Heart left ventricle (tissue), 16 donors: ENCODE measurements at regions of chr3 and their contacts with region 1.

Region 1: GRCh38 chr3:186534113-186534669 is 10.0 kb downstream of the CRYGS start:
- DNase-seq: no peak
- ATAC-seq: peak in 2 of 4 donors; percentile 16 to 60
- H3K4me3 ChIP-seq: no peak overlapping the region
- H3K27ac ChIP-seq: no peak overlapping the region
- H3K4me1 ChIP-seq: peaks cover 0 to 30% (median 7%) of the 10 kb centered on the region in 12 donors
- H3K27me3 ChIP-seq: no peaks in the 10 kb centered on the region
- CTCF ChIP-seq: no peak
- POLR2A ChIP-seq: no peak

Region 2: DNA sequence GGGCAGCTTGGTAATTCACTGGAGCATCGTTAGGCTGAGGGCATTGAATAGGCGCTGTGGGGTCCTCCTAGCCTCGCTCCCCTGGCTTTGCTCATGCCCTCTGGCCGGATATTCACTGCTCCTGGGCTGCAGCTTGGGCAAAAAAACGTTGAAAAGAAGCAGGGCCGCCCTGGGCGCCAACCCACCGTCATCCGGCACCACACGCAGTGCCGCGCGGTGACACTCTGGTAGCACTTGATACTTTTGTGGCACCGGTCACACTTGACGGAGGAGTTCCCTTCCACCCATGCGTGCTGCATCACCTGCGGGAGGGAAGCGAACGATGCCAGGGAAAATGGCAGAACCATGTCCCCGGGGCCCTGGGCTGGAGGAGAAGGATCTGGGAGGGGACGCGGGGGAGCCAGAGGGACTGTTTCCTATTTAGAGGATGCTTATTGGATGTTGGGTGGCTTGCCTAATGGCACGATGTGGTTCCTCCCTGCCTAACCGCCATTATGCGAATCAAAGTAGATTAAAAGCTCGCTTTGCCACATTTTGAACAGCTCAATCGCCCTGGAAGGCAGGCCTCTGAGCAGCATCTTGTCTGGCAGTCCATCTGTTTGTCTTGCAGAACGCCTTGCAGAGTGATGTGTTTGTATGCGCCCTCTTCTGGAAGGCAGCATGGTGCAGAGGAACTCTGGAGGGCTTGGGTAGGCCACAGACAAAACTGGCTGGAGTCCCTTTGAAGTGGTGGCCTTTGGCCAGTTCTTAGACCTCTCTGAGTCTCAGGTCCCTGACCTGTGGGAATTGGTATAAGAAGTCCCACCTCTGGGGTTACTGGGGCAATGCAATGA is 265.4 kb before region 1 on chr3:
- intact Hi-C with region 1: loop called in 1 of 10 experiments (anchors 5 kb)
- DNase-seq: no peak
- ATAC-seq: no peak
- H3K4me3 ChIP-seq: no peak overlapping the region
- H3K27ac ChIP-seq: no peak overlapping the region
- H3K4me1 ChIP-seq: peaks cover 0 to 3% (median 0%) of the 10 kb centered on the region in 12 donors
- H3K27me3 ChIP-seq: no peaks in the 10 kb centered on the region
- CTCF ChIP-seq: peak in 1 of 12 donors; percentile 7
- POLR2A ChIP-seq: no peak

Region 3: DNA sequence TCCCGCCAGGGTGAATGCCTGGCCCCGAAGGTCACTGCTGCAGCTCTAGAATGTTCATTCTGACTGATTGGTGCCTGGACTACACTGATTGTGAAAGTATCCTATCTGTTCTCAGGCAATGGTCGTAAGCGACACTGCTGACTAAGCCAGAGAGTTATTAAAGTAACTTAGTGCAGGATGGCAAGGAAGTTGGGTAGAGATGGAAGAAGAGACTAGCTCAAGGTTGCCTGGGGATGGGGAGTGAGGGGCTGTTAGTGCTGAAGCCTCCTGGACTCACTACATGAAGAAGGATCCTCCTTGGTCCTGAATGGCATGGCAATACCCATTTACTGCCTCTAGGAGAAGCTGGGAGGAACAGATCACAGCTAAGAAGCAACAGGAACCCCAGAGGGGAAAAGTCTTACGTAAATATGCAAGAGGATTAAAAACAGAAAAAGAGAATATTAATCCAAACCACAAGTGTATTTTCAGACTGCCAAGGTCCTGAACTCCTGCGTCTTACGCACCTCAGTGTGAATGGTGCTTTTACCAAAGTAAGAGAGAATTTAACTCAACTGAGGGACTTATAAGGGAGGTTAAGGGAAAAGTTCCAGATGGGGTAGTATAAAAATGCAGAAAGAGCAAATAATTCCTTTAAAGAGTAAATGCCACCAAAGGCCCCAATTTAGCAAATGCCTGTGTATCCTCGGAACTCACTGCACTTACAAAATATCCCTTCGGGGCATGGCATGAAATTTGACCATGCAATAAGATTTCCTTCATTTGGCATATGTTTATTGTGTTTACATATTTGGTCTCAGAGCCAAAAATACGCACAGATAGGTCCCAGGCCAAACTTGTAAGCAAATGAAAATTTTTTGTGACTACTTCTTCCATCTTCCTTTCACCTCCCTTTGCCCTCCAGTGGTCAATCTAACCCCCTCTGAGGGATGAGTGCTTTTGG is 108.1 kb before region 1 on chr3:
- intact Hi-C with region 1: loop called in 1 of 10 experiments (anchors 10 kb)
- DNase-seq: no peak
- ATAC-seq: peak in 3 of 4 donors; percentile 44 to 60 (median 55)
- H3K4me3 ChIP-seq: no peak overlapping the region
- H3K27ac ChIP-seq: peak overlapping the region in 6 of 12 donors; percentile 8 to 77 (median 49)
- H3K4me1 ChIP-seq: peaks cover 0 to 34% (median 13%) of the 10 kb centered on the region in 12 donors
- H3K27me3 ChIP-seq: peaks cover 0 to 4% (median 0%) of the 10 kb centered on the region in 9 donors
- CTCF ChIP-seq: peak in 5 of 12 donors; percentile 7 to 37 (median 30)
- POLR2A ChIP-seq: no peak